ENCODE measurements at regions of chr19 and their contacts with region 1.

Region 1: DNA sequence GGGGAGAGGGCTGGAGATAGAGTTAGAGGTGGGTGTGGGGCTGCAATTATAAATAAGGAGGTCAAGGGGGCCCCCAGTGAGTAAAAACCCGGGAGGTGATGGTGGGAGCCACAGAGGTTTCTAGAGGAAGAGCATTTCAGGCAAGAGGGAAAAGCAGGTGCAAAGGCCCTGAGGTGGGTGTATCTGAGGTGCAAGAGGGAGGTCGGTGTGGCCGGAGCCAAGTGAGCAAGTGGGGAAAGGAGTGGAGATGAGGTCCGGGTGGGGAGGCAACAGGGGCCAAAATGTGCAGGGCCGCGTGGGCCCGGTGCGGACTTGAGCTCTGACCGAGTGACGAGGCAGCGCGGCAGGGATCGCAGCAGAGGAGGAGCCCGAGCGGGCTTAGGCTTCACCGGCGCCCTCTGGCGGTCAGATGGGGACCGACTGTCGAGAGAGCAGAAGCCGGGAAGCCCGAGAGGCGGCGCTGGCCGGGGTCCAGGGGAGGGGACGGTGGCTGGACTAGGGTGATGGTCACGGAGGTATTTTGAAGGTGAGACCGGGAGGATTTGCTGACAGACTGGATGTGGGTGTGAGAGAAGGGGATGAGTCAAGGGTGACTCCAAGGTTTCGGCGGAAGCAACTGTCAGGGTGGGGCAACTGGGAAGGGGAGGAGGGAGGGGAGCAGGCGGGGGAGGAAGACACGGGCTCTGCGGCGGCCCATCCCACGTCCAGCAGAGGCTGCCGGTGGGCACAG is 17.7 kb upstream of the SPACA4 start:
- DNase-seq: peak; percentile 97
- H3K4me3 Mint-ChIP-seq: peak overlapping the region; percentile 70
- H3K27ac Mint-ChIP-seq: peak overlapping the region; percentile 58
- H3K4me1 Mint-ChIP-seq: peaks cover 19% of the 10 kb centered on the region
- H3K27me3 Mint-ChIP-seq: peaks cover 65% of the 10 kb centered on the region
- CTCF ChIP-seq: peak; percentile 97

Region 2: GRCh38 chr19:48271531-48272151 is 317.2 kb before region 1 on chr19:
- CTCF ChIA-PET with region 1: interaction called, 5 read pairs
- intact Hi-C with region 1: loop called (anchors 1 kb)
- DNase-seq: peak; percentile 24
- H3K4me3 Mint-ChIP-seq: peak overlapping the region; percentile 79
- H3K27ac Mint-ChIP-seq: peak overlapping the region; percentile 82
- H3K4me1 Mint-ChIP-seq: peaks cover 27% of the 10 kb centered on the region
- H3K27me3 Mint-ChIP-seq: peaks cover 23% of the 10 kb centered on the region
- CTCF ChIP-seq: no peak

Region 3: GRCh38 chr19:48424694-48425219 is 164.1 kb before region 1 on chr19:
- CTCF ChIA-PET with region 1: interaction called, 13 read pairs
- intact Hi-C with region 1: no loop called
- DNase-seq: peak; percentile 67
- H3K4me3 Mint-ChIP-seq: peak overlapping the region; percentile 45
- H3K27ac Mint-ChIP-seq: peak overlapping the region; percentile 80
- H3K4me1 Mint-ChIP-seq: peaks cover 19% of the 10 kb centered on the region
- H3K27me3 Mint-ChIP-seq: no peaks in the 10 kb centered on the region
- CTCF ChIP-seq: no peak

Region 4: DNA sequence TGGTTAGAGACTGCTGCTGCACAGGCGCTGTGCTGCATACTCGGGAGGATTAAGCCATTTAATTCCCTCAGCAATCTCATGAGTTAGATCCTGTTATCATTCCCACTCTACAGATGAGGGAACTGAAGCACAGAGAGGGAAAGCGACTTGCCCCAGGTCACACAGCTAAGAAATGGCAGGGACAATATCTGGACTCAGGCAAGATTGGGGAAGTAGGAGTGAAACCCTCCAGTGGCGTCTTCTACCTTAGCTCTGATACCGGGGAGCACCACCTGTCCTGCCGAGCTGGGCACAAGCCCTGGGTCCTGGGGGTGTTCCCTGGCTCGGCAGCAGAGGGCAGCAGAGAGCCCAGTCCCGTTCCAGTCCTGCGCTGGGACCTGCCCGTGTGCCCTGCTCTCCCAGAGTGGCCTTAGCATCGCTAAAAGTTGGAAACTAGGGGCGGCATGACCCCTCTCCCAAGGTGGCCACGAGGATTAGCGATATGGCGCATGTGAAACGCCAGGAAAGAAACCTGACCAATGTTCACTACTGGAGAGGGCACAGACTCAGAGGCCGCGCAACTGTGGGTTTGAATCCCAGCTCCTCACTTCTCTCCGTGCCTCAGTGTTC is 99.1 kb before region 1 on chr19:
- CTCF ChIA-PET with region 1: interaction called, 45 read pairs
- intact Hi-C with region 1: loop called (anchors 5 kb)
- DNase-seq: peak; percentile 96
- H3K4me3 Mint-ChIP-seq: no peak overlapping the region
- H3K27ac Mint-ChIP-seq: no peak overlapping the region
- H3K4me1 Mint-ChIP-seq: peaks cover 42% of the 10 kb centered on the region
- H3K27me3 Mint-ChIP-seq: peaks cover 43% of the 10 kb centered on the region
- CTCF ChIP-seq: peak; percentile 91

Region 5: GRCh38 chr19:48608798-48609263 is 20.0 kb after region 1 on chr19:
- CTCF ChIA-PET with region 1: interaction called, 13 read pairs
- intact Hi-C with region 1: no loop called
- DNase-seq: peak; percentile 66
- H3K4me3 Mint-ChIP-seq: no peak overlapping the region
- H3K27ac Mint-ChIP-seq: no peak overlapping the region
- H3K4me1 Mint-ChIP-seq: peaks cover 6% of the 10 kb centered on the region
- H3K27me3 Mint-ChIP-seq: no peaks in the 10 kb centered on the region
- CTCF ChIP-seq: peak; percentile 54

Region 6: DNA sequence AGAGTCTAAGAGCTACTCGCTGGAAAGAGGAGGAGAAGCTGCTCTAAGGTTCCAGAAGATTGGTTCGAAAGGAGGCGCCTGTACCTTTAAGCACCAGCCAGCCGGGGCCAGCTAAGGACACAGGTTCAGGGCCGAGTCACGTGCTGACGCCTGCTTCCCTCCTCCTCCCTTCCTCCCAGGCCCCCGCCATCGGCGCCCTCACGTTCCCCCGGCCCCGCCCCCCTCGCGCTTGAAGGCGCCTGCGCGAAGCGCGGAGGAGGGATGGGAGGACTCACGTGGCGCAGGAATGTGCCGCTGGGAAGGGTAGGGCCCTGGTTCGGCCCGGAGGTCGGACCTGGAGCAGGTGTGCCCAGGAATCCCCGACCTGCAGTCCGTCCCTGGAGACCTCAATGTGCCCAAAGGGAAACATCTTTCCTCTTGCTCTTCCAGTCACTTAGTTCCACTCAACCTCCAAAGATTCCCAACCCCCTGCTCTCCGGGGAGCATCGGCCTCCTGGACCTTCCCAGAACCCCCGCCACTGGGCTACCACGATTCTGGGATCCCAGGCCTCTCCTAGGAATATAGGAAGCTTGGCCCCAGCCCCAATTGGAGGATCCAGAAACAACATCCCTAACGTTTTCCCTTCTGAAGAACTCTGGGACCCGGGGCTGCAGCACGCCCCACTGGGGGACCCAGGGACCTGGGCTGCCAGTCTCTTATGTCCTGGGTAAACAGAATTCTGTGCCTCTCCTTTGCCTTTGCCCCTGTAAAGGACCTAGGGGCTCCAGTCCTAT is 45.8 kb after region 1 on chr19:
- CTCF ChIA-PET with region 1: no interaction called
- intact Hi-C with region 1: no loop called
- DNase-seq: peak; percentile 97
- H3K4me3 Mint-ChIP-seq: peak overlapping the region; percentile 70
- H3K27ac Mint-ChIP-seq: peak overlapping the region; percentile 61
- H3K4me1 Mint-ChIP-seq: peaks cover 30% of the 10 kb centered on the region
- H3K27me3 Mint-ChIP-seq: peaks cover 18% of the 10 kb centered on the region
- CTCF ChIP-seq: no peak

Region 7: DNA sequence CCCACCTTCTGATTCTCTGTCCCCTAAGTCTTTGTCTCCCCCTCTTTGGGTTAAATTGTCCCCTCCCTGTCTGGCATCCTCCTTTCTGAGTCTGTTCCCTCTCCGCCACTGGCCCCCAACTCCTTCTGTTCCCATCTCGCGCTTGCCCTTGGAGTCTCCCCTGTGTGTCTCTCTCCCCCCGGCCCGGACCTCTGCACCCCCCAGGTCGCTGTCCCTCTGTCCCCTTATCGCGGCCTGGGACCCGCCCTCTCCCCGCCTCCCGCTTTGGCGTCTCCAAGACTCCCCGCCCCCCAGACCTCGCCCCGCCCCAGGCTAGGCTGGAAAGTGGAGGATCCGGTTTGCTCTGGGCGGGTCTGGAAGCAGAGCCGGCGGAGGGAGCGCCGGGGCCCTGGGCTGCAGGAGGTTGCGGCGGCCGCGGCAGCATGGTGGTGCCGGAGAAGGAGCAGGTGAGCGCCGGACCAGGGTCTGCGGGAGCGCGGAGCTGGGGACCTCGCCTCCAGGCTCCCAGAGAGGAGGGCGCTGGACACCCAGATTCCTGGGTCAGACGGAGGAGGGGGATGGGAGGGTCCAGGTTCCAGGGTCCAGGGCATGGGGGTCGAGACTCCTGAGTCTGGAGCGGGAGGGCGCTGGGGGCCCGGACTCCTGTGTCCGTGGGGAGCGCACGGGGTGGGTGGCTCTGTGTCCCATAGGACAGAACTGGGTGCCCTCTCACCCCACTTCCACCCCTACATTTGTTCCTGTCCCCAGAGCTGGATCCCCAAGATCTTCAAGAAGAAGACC is 568.8 kb after region 1 on chr19 and contains the start of gene TRPM4:
- CTCF ChIA-PET with region 1: no interaction called
- intact Hi-C with region 1: no loop called
- DNase-seq: peak; percentile 98
- H3K4me3 Mint-ChIP-seq: peak within 1 kb of the TSS; percentile 73
- H3K27ac Mint-ChIP-seq: peak within 1 kb of the TSS; percentile 47
- H3K4me1 Mint-ChIP-seq: peaks cover 16% of the 10 kb centered on the region
- H3K27me3 Mint-ChIP-seq: peaks cover 53% of the 10 kb centered on the region
- CTCF ChIP-seq: no peak
- total RNA-seq, gene TRPM4: 70.0 and 79.9 TPM in 2 replicates